H1 (cell line): ENCODE measurements at regions of chr10 and their contacts with region 1.

Region 1: DNA sequence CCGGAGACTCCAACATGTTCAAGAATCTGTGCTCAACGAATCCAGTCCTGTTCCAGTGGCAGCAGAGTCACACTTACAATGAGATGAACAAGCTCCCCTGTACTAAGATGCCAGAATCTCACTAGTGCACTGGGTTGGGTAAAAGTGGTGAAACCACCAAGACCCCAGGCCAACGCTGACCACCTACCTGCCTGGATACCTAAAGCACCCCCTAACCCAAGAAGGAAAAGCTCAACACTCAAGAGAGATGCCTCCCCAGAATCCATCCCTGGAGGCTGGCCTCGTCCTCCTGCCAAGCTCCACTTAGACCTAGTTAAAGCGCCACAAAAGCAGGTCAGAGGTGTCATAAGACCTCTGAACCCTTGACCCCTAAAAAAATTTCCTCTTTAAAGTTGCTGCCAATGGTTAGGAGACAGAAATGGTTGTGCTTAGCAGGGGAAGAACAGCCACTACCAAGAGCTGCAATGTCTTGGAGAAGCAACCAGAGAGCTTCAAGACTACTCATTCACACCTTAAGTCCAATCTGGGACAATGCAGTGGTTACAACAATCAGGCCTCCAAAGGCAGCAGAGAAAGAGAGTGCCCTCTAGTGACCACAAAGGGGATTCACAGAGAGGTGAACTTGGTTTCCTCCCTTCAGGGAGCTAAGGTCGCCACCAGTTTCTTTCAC is 94.6 kb upstream of the MACROH2A2 start:
- DNase-seq: no peak
- H3K4me3 ChIP-seq: no peak overlapping the region
- H3K27ac ChIP-seq: no peak overlapping the region
- H3K4me1 ChIP-seq: peaks cover 2 to 9% (median 3%) of the 10 kb centered on the region in 4 experiments; a peak in 6 of 7 replicates
- H3K27me3 ChIP-seq: peaks cover 0 to 13% (median 5%) of the 10 kb centered on the region in 4 experiments; a peak in 3 of 7 replicates
- CTCF ChIP-seq: peak; percentile 43 to 93 (median 87)
- EP300 ChIP-seq: no peak
- POLR2A ChIP-seq: no peak
- RAD21 ChIP-seq: peak; percentile 83 to 88

Region 2: GRCh38 chr10:69678005-69678654 is 279.9 kb before region 1 on chr10:
- CTCF ChIA-PET with region 1: no interaction called
- POLR2A ChIA-PET with region 1: no interaction called
- DNase-seq: no peak
- H3K4me3 ChIP-seq: no peak overlapping the region
- H3K27ac ChIP-seq: no peak overlapping the region
- H3K4me1 ChIP-seq: peaks cover 0 to 4% (median 0%) of the 10 kb centered on the region in 4 experiments; a peak in 1 of 7 replicates
- H3K27me3 ChIP-seq: no peaks in the 10 kb centered on the region
- CTCF ChIP-seq: no peak
- EP300 ChIP-seq: no peak
- POLR2A ChIP-seq: no peak
- RAD21 ChIP-seq: no peak

Region 3: GRCh38 chr10:69742928-69743602 is 215.0 kb before region 1 on chr10:
- CTCF ChIA-PET with region 1: interaction called, 18 read pairs
- POLR2A ChIA-PET with region 1: no interaction called
- DNase-seq: peak; percentile 19 to 86
- H3K4me3 ChIP-seq: no peak overlapping the region
- H3K27ac ChIP-seq: no peak overlapping the region
- H3K4me1 ChIP-seq: peaks cover 0 to 9% (median 1%) of the 10 kb centered on the region in 4 experiments; a peak in 3 of 7 replicates
- H3K27me3 ChIP-seq: no peaks in the 10 kb centered on the region
- CTCF ChIP-seq: peak; percentile 89 to 94 (median 90)
- EP300 ChIP-seq: no peak
- POLR2A ChIP-seq: no peak
- RAD21 ChIP-seq: peak; percentile 66 to 81

Region 4: DNA sequence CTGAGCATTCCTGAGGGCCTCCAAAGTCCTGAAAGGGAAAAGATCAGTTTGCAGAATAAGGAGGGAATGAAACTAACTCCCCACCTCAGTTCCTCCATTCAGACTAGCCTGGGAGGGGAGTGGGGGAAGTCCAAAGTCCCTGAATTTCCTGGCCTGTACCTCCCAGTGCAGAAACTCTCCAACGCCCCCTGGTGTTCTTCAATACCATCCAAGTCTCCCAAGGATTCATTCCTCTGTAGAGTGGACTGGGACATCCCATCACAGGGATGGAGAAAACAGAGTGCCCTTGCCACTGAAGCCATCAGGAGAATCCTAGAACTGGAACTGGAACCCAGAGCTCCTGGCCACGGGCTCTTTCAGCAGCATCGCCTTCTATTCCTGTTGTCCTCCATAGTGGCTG is 157.9 kb before region 1 on chr10:
- CTCF ChIA-PET with region 1: interaction called, 11 read pairs
- POLR2A ChIA-PET with region 1: no interaction called
- DNase-seq: peak in 1 of 2 experiments; percentile 74
- H3K4me3 ChIP-seq: no peak overlapping the region
- H3K27ac ChIP-seq: no peak overlapping the region
- H3K4me1 ChIP-seq: peaks cover 0 to 8% (median 4%) of the 10 kb centered on the region in 4 experiments; a peak in 4 of 7 replicates
- H3K27me3 ChIP-seq: peaks cover 10 to 34% (median 24%) of the 10 kb centered on the region in 4 experiments; a peak in 6 of 7 replicates
- CTCF ChIP-seq: peak; percentile 48 to 90 (median 76)
- EP300 ChIP-seq: no peak
- POLR2A ChIP-seq: no peak
- RAD21 ChIP-seq: peak; percentile 61 to 74

Region 5: DNA sequence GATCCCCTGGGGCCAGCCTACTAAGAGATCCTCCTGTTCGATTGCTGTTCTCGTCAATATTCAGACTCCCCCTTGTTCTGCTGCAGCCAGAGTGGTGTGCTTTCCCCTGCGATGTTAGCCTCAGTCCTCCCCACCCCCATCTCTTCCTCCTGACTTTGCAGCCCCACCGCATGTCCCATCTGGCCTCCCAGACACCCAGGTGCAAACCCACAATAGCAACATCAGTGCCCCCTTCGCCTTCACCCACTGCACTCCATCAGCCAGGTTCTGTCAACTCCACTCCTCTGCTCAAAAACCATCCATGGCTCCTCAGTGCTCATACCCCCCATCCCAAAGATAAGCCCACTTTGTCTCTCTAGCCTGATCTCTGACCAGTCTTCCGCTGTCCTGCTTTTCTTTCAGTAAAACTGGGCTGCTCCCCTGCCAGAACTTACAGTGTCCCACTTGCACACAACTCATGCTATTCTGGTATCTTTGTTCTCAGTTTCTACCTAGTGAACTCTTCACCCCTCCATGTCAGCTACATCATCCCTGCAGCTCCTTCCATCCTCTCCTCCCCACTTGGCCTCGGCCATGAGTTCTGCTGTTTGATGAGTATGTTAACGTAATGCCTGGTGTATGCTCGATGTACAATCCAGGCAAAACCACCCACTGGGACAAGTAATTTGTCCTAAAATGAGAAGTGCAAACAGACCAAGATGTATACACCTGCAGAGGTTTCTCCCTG is 129.7 kb before region 1 on chr10:
- CTCF ChIA-PET with region 1: no interaction called
- POLR2A ChIA-PET with region 1: no interaction called
- DNase-seq: no peak
- H3K4me3 ChIP-seq: no peak overlapping the region
- H3K27ac ChIP-seq: no peak overlapping the region
- H3K4me1 ChIP-seq: peaks cover 0 to 16% (median 9%) of the 10 kb centered on the region in 4 experiments; a peak in 5 of 7 replicates
- H3K27me3 ChIP-seq: no peaks in the 10 kb centered on the region
- CTCF ChIP-seq: no peak
- EP300 ChIP-seq: no peak
- POLR2A ChIP-seq: no peak
- RAD21 ChIP-seq: no peak

Region 6: GRCh38 chr10:69901628-69902505 is 56.2 kb before region 1 on chr10:
- CTCF ChIA-PET with region 1: interaction called, 24 read pairs
- POLR2A ChIA-PET with region 1: no interaction called
- DNase-seq: peak; percentile 31 to 71
- H3K4me3 ChIP-seq: no peak overlapping the region
- H3K27ac ChIP-seq: no peak overlapping the region
- H3K4me1 ChIP-seq: peaks cover 0 to 15% (median 7%) of the 10 kb centered on the region in 4 experiments; a peak in 3 of 7 replicates
- H3K27me3 ChIP-seq: no peaks in the 10 kb centered on the region
- CTCF ChIP-seq: peak; percentile 72 to 96 (median 89)
- EP300 ChIP-seq: no peak
- POLR2A ChIP-seq: no peak
- RAD21 ChIP-seq: peak; percentile 52 to 73

Region 7: GRCh38 chr10:69974551-69975155 is 16.6 kb after region 1 on chr10:
- CTCF ChIA-PET with region 1: interaction called, 31 read pairs
- POLR2A ChIA-PET with region 1: no interaction called
- DNase-seq: no peak
- H3K4me3 ChIP-seq: no peak overlapping the region
- H3K27ac ChIP-seq: no peak overlapping the region
- H3K4me1 ChIP-seq: no peaks in the 10 kb centered on the region; a peak in 1 of 7 replicates
- H3K27me3 ChIP-seq: peaks cover 0 to 5% (median 0%) of the 10 kb centered on the region in 4 experiments; a peak in 1 of 7 replicates
- CTCF ChIP-seq: no peak
- EP300 ChIP-seq: no peak
- POLR2A ChIP-seq: no peak
- RAD21 ChIP-seq: no peak

Region 8: GRCh38 chr10:70146489-70147258 is 188.7 kb after region 1 on chr10 and contains the start of gene TYSND1:
- CTCF ChIA-PET with region 1: interaction called, 10 read pairs
- POLR2A ChIA-PET with region 1: no interaction called
- DNase-seq: peak; percentile 96 to 97
- H3K4me3 ChIP-seq: peak within 1 kb of the TSS; percentile 51 to 70 (median 59)
- H3K27ac ChIP-seq: peak within 1 kb of the TSS; percentile 67
- H3K4me1 ChIP-seq: peaks cover 3 to 9% (median 6%) of the 10 kb centered on the region in 4 experiments; a peak in 3 of 7 replicates
- H3K27me3 ChIP-seq: peaks cover 0 to 8% (median 4%) of the 10 kb centered on the region in 4 experiments; a peak in 3 of 7 replicates
- CTCF ChIP-seq: peak; percentile 77 to 82 (median 81)
- EP300 ChIP-seq: no peak
- POLR2A ChIP-seq: peak; percentile 64 to 87
- RAD21 ChIP-seq: peak; percentile 58 to 70
- total RNA-seq, gene TYSND1: 14.1 and 15.0 TPM in 2 replicates

Region 9: DNA sequence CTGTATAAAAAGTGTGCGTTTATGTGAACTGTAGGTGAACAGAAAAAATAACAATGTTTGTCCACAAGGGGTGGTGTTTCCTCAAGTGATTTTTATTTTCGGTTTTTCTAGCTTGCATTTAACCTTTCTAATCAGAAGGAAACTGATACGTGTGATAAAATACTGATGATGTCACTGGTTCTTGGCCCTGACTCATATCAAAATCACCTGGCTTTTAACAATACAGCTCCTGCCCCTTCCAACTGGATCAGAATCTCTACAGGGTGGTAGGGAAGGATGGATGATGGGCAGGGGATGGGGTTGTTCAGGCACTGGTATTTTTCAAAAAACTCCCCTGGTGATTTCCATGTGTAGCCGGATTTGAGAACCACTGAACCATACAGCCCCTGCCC is 314.9 kb after region 1 on chr10:
- CTCF ChIA-PET with region 1: no interaction called
- POLR2A ChIA-PET with region 1: no interaction called
- DNase-seq: no peak
- H3K4me3 ChIP-seq: no peak overlapping the region
- H3K27ac ChIP-seq: no peak overlapping the region
- H3K4me1 ChIP-seq: 0 out of 7 replicates have a peak, but pooled peaks cover 0 to 5% (median 0%) of the 10 kb centered on the region in 4 experiments
- H3K27me3 ChIP-seq: no peaks in the 10 kb centered on the region
- CTCF ChIP-seq: peak in 1 of 3 experiments; percentile 29; a peak in 2 of 4 replicates
- EP300 ChIP-seq: no peak
- POLR2A ChIP-seq: no peak
- RAD21 ChIP-seq: 0 out of 4 replicates have a peak, but pooled peaks of 1 of the 2 experiments have one; percentile 7